ENCODE measurements at regions of chr1 and their contacts with region 1.

Region 1: GRCh38 chr1:93680757-93681550 is 683 bp downstream of the BCAR3 start:
- DNase-seq: peak; percentile 80
- H3K4me3 ChIP-seq: peak overlapping the region; percentile 75 to 86
- H3K27ac ChIP-seq: peak overlapping the region; percentile 86 to 95
- H3K4me1 ChIP-seq: peaks cover 19 to 24% of the 10 kb centered on the region in 2 experiments; a peak in 3 of 4 replicates
- H3K27me3 ChIP-seq: no peaks in the 10 kb centered on the region
- CTCF ChIP-seq: peak; percentile 64
- EP300 ChIP-seq: no peak
- RAD21 ChIP-seq: peak; percentile 64

Region 2: DNA sequence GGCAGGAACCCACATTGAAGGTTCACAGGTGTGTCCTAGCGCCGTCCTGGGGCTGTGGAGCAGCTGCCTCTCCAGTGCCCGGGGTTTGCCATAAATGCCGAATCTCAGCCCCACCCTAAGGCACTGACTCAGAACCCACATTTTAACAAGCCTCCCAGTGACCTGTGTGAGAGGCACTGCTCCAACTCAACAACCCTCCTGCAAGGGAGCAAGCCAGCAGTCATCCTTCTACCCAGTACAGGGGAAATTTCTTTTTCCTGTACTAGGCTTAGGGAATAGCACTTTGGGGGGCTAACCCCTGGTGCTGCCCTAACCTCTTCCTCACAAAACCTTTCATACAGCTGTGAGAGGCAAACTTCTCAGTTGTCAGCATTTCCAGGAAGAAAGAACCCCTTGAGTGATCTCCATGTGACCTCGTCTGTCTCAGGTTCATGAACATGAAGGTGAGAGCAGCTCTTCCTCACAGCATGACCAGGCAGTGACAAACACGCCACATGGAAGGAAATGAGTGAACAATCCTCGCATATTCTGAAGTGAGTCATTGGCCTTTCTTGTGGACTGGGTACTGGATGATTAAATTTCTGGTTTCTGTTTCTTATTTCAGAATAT is 12.1 kb after region 1 on chr1:
- CTCF ChIA-PET with region 1: interaction called, 10 read pairs
- POLR2A ChIA-PET with region 1: interaction called, 3 read pairs
- DNase-seq: no peak
- H3K4me3 ChIP-seq: no peak overlapping the region
- H3K27ac ChIP-seq: peak overlapping the region; percentile 35 to 94
- H3K4me1 ChIP-seq: peaks cover 20 to 54% of the 10 kb centered on the region in 2 experiments; a peak in 3 of 4 replicates
- H3K27me3 ChIP-seq: no peaks in the 10 kb centered on the region
- CTCF ChIP-seq: no peak
- EP300 ChIP-seq: peak in 1 of 2 experiments; percentile 91; a peak in 2 of 4 replicates
- RAD21 ChIP-seq: no peak